Activated CD4-positive, alpha-beta memory T cell treated with anti-CD3 and anti-CD28 coated beads for 36 hours (primary cell): ENCODE measurements at regions of chr15 and their contacts with region 1.

Region 1: GRCh38 chr15:98548154-98548971 is 100.0 kb upstream of the IGF1R start:
- DNase-seq: peak; percentile 67
- H3K4me3 Mint-ChIP-seq: peak overlapping the region; percentile 73
- H3K27ac Mint-ChIP-seq: no peak overlapping the region
- H3K4me1 Mint-ChIP-seq: peaks cover 14% of the 10 kb centered on the region
- H3K27me3 Mint-ChIP-seq: peaks cover 48% of the 10 kb centered on the region

Region 2: GRCh38 chr15:97661796-97662195 is 886.6 kb before region 1 on chr15:
- CTCF ChIA-PET with region 1: no interaction called
- POLR2A ChIA-PET with region 1: no interaction called
- intact Hi-C with region 1: no loop called
- DNase-seq: no peak
- H3K4me3 Mint-ChIP-seq: no peak overlapping the region
- H3K27ac Mint-ChIP-seq: no peak overlapping the region
- H3K4me1 Mint-ChIP-seq: no peaks in the 10 kb centered on the region
- H3K27me3 Mint-ChIP-seq: no peaks in the 10 kb centered on the region

Region 3: GRCh38 chr15:98369081-98369716 is 179.2 kb before region 1 on chr15:
- CTCF ChIA-PET with region 1: no interaction called
- POLR2A ChIA-PET with region 1: no interaction called
- intact Hi-C with region 1: no loop called
- DNase-seq: no peak
- H3K4me3 Mint-ChIP-seq: no peak overlapping the region
- H3K27ac Mint-ChIP-seq: no peak overlapping the region
- H3K4me1 Mint-ChIP-seq: no peaks in the 10 kb centered on the region
- H3K27me3 Mint-ChIP-seq: peaks cover 3% of the 10 kb centered on the region

Region 4: GRCh38 chr15:98455965-98456364 is 92.4 kb before region 1 on chr15:
- CTCF ChIA-PET with region 1: no interaction called
- POLR2A ChIA-PET with region 1: no interaction called
- intact Hi-C with region 1: no loop called
- DNase-seq: no peak
- H3K4me3 Mint-ChIP-seq: no peak overlapping the region
- H3K27ac Mint-ChIP-seq: no peak overlapping the region
- H3K4me1 Mint-ChIP-seq: no peaks in the 10 kb centered on the region
- H3K27me3 Mint-ChIP-seq: peaks cover 9% of the 10 kb centered on the region

Region 5: GRCh38 chr15:98568382-98569017 is 20.1 kb after region 1 on chr15:
- CTCF ChIA-PET with region 1: no interaction called
- POLR2A ChIA-PET with region 1: no interaction called
- intact Hi-C with region 1: no loop called
- DNase-seq: no peak
- H3K4me3 Mint-ChIP-seq: no peak overlapping the region
- H3K27ac Mint-ChIP-seq: no peak overlapping the region
- H3K4me1 Mint-ChIP-seq: no peaks in the 10 kb centered on the region
- H3K27me3 Mint-ChIP-seq: peaks cover 2% of the 10 kb centered on the region

Region 6: DNA sequence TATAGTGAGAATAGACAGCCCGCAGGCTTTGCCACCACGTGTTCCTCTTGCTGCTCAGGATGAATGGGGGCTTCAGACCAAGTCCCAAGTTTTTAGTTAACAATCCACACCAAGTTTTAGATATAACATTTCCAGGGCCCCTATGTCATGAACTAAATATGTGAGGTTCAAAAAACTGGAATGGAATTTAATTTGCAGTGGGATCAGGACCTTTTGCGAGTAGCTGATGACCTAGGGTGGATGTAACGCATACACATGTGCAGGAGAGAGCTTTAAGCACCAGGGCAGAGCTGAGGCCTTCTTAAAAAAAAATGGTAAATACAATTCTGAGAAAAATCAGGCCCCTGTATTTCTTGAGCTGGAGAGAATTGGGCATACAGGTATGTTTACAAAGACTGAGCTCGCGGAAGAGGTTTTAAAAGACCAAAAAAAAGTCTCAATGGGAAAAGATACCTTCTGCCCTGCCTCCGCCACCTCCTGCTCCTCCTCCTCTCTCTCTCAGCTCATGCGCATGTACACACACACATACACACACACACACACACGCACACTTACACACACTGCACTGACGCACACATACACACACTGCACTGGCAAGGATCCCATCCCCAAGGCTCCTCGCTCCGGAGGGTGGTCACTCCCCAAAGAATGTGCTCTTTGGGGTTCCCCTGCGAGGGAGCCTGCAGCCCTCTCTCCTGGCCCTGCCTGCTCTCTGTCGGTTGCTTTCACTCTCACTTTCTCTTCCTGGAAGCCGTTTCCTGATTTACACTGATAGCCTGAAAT is 51.7 kb after region 1 on chr15:
- CTCF ChIA-PET with region 1: no interaction called
- POLR2A ChIA-PET with region 1: no interaction called
- intact Hi-C with region 1: loop called (anchors 2 kb)
- DNase-seq: peak; percentile 46
- H3K4me3 Mint-ChIP-seq: peak overlapping the region; percentile 78
- H3K27ac Mint-ChIP-seq: peak overlapping the region; percentile 84
- H3K4me1 Mint-ChIP-seq: peaks cover 13% of the 10 kb centered on the region
- H3K27me3 Mint-ChIP-seq: peaks cover 2% of the 10 kb centered on the region